ENCODE measurements at regions of chr11 and their contacts with region 1.

Region 1: DNA sequence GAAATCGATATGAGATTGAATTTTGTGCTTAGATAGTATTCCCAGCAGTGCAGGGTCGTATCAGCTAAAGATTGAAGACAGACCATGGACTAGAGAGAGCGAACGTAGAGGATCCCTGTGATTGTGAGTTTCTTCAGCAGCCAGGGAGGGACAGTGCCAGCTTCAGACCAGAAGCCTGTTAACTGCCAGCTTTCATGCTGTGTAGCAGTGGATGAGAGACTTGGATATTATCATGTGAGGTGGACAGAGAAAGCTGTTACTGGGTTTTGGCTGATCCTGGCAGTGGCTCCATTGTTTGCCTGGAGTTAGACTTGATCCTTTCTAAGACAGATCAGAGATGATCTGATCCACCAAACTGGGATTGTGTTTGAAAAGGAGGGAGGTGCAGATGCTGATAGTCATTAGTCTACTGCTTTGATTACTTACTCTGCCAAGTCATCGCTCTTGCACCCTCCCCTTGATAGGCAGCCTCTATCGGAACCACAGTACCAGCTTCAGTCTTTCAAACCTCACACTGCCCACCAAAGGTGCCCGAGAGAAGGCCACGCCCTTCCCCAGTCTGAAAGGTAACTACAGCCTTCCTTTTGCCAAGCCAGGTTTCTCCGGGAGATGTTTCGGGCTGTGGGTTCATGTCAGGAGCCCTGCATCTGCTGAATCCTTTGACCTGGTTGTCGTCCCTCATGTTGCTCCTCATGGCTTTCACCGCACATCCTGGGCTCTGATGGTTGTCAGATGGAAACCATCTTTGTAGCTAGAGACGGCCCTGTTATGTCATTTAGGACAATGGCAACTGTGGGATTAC is 16.2 kb downstream of the MADD start:
- DNase-seq: no peak
- ATAC-seq: no peak
- H3K4me3 Mint-ChIP-seq: no peak overlapping the region
- H3K27ac Mint-ChIP-seq: peak overlapping the region; percentile 8
- H3K4me1 Mint-ChIP-seq: no peaks in the 10 kb centered on the region
- H3K27me3 Mint-ChIP-seq: no peaks in the 10 kb centered on the region

Region 2: GRCh38 chr11:47259178-47259977 is 26.8 kb before region 1 on chr11:
- CTCF ChIA-PET with region 1: no interaction called
- POLR2A ChIA-PET with region 1: no interaction called
- intact Hi-C with region 1: no loop called
- DNase-seq: peak; percentile 58
- ATAC-seq: peak; percentile 86
- H3K4me3 Mint-ChIP-seq: no peak overlapping the region
- H3K27ac Mint-ChIP-seq: no peak overlapping the region
- H3K4me1 Mint-ChIP-seq: peaks cover 3% of the 10 kb centered on the region
- H3K27me3 Mint-ChIP-seq: no peaks in the 10 kb centered on the region

Region 3: GRCh38 chr11:47373876-47374720 is 87.9 kb after region 1 on chr11:
- CTCF ChIA-PET with region 1: no interaction called
- POLR2A ChIA-PET with region 1: no interaction called
- intact Hi-C with region 1: no loop called
- DNase-seq: peak; percentile 92
- ATAC-seq: peak; percentile 89
- H3K4me3 Mint-ChIP-seq: no peak overlapping the region
- H3K27ac Mint-ChIP-seq: peak overlapping the region; percentile 25
- H3K4me1 Mint-ChIP-seq: peaks cover 22% of the 10 kb centered on the region
- H3K27me3 Mint-ChIP-seq: no peaks in the 10 kb centered on the region

Region 4: DNA sequence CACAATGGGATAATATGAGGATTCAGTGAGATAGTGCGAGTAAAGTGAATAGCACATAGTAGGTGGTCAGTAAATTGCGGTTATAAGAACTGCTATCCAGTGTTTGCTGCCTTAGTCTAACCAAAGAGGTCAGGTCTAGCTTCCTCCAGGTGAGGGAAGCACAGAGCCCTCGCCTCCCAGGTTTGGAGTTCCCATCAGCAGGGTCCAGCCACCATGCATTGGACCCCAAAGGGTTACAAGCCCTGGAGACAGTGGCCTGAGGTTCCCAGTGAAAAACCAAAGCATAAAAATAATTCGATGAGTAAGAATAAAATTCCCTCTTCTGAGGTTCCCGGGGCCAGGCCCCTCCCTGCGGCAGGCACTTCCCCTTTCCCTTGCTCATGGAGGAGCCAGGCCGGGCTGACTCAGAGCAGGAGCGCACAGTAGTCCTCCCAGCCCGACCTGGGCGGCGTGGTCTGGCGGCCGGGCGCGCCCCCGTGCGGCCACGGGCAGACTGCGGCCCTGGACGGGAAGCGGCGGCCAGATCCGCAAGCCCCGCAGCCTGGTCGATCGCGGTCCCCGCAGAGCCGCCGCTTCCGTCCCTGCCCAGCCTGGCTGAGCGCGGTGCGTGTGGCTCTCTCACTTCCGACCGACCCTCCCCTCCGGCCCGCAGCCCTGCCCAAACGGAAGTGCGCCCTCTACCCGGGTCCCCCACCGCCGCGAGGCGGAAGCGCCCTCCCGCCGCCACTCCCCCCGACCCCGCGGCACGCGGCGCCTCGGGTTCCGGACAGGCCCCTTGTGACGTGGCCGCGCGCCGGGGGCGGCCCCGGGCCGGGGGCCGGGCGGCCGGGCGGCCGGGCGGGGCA is 121.8 kb after region 1 on chr11 and contains the start of gene SLC39A13:
- CTCF ChIA-PET with region 1: no interaction called
- POLR2A ChIA-PET with region 1: no interaction called
- intact Hi-C with region 1: no loop called
- DNase-seq: peak; percentile 95
- ATAC-seq: peak; percentile 91
- H3K4me3 Mint-ChIP-seq: peak within 1 kb of the TSS; percentile 89
- H3K27ac Mint-ChIP-seq: peak within 1 kb of the TSS; percentile 94
- H3K4me1 Mint-ChIP-seq: peaks cover 16% of the 10 kb centered on the region
- H3K27me3 Mint-ChIP-seq: no peaks in the 10 kb centered on the region
- total RNA-seq, gene SLC39A13: 8.6 to 10.7 TPM

Region 5: GRCh38 chr11:47731475-47731874 is 445.3 kb after region 1 on chr11:
- CTCF ChIA-PET with region 1: no interaction called
- POLR2A ChIA-PET with region 1: no interaction called
- intact Hi-C with region 1: loop called in 1 of 2 experiments (anchors 5 kb)
- DNase-seq: no peak
- ATAC-seq: no peak
- H3K4me3 Mint-ChIP-seq: no peak overlapping the region
- H3K27ac Mint-ChIP-seq: no peak overlapping the region
- H3K4me1 Mint-ChIP-seq: peaks cover 2% of the 10 kb centered on the region
- H3K27me3 Mint-ChIP-seq: no peaks in the 10 kb centered on the region